ENCODE measurements at regions of chr17 and their contacts with region 1.

Region 1: DNA sequence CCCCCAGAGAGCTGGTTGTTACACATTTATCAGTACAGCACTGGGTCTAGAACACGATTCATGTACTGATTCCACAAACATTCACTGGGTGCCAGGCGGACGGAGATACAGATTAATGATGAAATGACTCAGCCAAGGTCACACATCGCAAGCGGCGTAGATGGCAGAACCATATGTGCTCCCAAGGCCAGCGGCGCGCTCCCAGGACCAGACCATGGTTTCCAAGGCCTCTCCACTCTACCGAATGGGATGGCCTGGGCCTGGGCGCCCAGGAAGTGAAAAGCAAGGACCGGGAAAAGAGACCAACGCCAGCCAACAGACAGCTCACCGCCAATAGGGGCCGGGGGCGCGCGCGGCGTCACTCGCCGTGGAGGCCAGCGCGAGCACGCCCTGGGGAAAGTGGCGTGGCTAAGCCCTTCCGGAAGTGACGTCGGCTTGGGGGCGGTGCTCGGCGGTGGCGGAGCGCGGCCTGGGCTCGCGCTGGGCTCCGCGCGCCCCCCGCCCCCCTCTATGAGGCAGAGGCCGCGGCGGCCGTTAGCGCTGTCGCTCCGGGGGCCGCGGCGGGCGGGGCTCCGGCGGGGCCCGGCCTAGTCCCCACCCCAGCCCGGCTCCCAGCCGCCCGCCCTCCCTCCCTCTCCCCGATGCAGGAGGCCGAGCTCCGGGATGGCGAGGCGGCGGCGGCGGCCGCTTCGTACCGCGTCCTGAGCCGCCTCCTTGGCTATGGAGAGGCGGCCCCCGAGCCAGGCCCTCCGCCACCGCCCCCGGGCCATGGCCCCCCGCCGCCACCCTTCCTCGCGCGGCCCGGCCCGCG is at the start of gene SOCS7:
- DNase-seq: peak; percentile 87
- H3K4me3 ChIP-seq: peak within 1 kb of the TSS; percentile 72 to 78 (median 73)
- H3K27ac ChIP-seq: peak within 1 kb of the TSS; percentile 59
- H3K4me1 ChIP-seq: peaks cover 10% of the 10 kb centered on the region
- H3K27me3 ChIP-seq: no peaks in the 10 kb centered on the region
- CTCF ChIP-seq: no peak
- total RNA-seq, gene SOCS7: 16.2 to 23.2 TPM

Region 2: GRCh38 chr17:38379438-38379837 is 27.8 kb after region 1 on chr17:
- CTCF ChIA-PET with region 1: interaction called, 4 read pairs
- dilution Hi-C with region 1: no loop called
- in situ Hi-C with region 1: no loop called
- intact Hi-C with region 1: loop called (anchors 1 kb)
- DNase-seq: no peak
- H3K4me3 ChIP-seq: no peak overlapping the region
- H3K27ac ChIP-seq: no peak overlapping the region
- H3K4me1 ChIP-seq: no peaks in the 10 kb centered on the region
- H3K27me3 ChIP-seq: no peaks in the 10 kb centered on the region
- CTCF ChIP-seq: no peak

Region 3: GRCh38 chr17:38410201-38410600 is 58.6 kb after region 1 on chr17:
- CTCF ChIA-PET with region 1: interaction called, 23 read pairs
- dilution Hi-C with region 1: no loop called
- in situ Hi-C with region 1: loop called (anchors 5 kb)
- intact Hi-C with region 1: loop called (anchors 1 kb)
- DNase-seq: no peak
- H3K4me3 ChIP-seq: no peak overlapping the region
- H3K27ac ChIP-seq: no peak overlapping the region
- H3K4me1 ChIP-seq: peaks cover 4% of the 10 kb centered on the region
- H3K27me3 ChIP-seq: no peaks in the 10 kb centered on the region
- CTCF ChIP-seq: no peak

Region 4: GRCh38 chr17:38435795-38436194 is 84.2 kb after region 1 on chr17:
- CTCF ChIA-PET with region 1: no interaction called
- dilution Hi-C with region 1: loop called (anchors 5 kb)
- in situ Hi-C with region 1: no loop called
- intact Hi-C with region 1: no loop called
- DNase-seq: no peak
- H3K4me3 ChIP-seq: no peak overlapping the region
- H3K27ac ChIP-seq: no peak overlapping the region
- H3K4me1 ChIP-seq: no peaks in the 10 kb centered on the region
- H3K27me3 ChIP-seq: no peaks in the 10 kb centered on the region
- CTCF ChIP-seq: no peak

Region 5: GRCh38 chr17:38485146-38485468 is 133.5 kb after region 1 on chr17:
- CTCF ChIA-PET with region 1: no interaction called
- dilution Hi-C with region 1: no loop called
- in situ Hi-C with region 1: no loop called
- intact Hi-C with region 1: loop called (anchors 10 kb)
- DNase-seq: no peak
- H3K4me3 ChIP-seq: no peak overlapping the region
- H3K27ac ChIP-seq: no peak overlapping the region
- H3K4me1 ChIP-seq: peaks cover 7% of the 10 kb centered on the region
- H3K27me3 ChIP-seq: no peaks in the 10 kb centered on the region
- CTCF ChIP-seq: no peak

Region 6: DNA sequence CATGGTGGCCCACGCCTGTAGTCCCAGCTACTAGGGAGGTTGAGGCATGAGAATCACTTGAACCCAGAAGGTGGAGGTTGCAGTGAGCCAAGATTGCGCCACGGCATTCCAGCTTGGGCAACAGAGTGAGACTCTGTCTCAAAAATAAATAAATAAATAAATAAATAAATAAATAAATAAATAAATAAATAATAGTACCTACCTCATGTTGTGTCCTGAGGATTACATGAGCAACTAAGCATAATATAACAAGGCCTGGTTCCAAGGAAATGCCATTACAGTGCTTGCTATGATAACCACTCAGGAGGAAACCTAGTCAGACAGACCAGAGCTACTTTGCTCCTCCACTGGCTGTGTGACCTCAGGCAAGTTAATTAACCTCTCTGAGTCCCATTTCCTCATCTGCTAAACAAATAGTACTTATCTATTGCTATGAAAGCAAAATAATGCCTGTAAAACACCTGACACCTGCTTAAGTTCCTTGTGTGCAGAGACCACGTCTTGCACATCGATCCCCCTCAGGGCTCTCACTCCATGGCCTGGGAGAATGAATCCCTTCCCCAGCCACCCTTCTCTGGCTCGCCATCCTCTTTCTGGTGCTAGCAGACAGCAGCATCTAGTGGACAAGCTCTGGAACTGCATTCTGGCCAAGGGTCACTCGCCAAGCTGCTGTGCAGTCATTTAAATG is 315.6 kb after region 1 on chr17:
- CTCF ChIA-PET with region 1: interaction called, 4 read pairs
- dilution Hi-C with region 1: no loop called
- in situ Hi-C with region 1: loop called in 1 of 2 experiments (anchors 25 kb)
- intact Hi-C with region 1: loop called (anchors 2 kb)
- DNase-seq: peak; percentile 47
- H3K4me3 ChIP-seq: no peak overlapping the region
- H3K27ac ChIP-seq: no peak overlapping the region
- H3K4me1 ChIP-seq: no peaks in the 10 kb centered on the region
- H3K27me3 ChIP-seq: peaks cover 2% of the 10 kb centered on the region
- CTCF ChIP-seq: peak; percentile 100